CD8-positive, alpha-beta T cell (primary cell): ENCODE measurements at regions of chr17 and their contacts with region 1.

Region 1: GRCh38 chr17:65027305-65027704 is 29.2 kb downstream of the GNA13 start:
- DNase-seq: peak in 5 of 9 experiments; percentile 49 to 80 (median 66)
- ATAC-seq: peak; percentile 81
- H3K4me3 ChIP-seq: no peak overlapping the region
- H3K4me3 Mint-ChIP-seq: peak overlapping the region; percentile 45
- H3K27ac ChIP-seq: peak overlapping the region in 1 of 2 experiments; percentile 55
- H3K27ac Mint-ChIP-seq: peak overlapping the region; percentile 75
- H3K4me1 ChIP-seq: peaks cover 63% of the 10 kb centered on the region
- H3K4me1 Mint-ChIP-seq: peaks cover 87% of the 10 kb centered on the region
- H3K27me3 ChIP-seq: no peaks in the 10 kb centered on the region
- H3K27me3 Mint-ChIP-seq: no peaks in the 10 kb centered on the region
- CTCF ChIP-seq: peak; percentile 59

Region 2: DNA sequence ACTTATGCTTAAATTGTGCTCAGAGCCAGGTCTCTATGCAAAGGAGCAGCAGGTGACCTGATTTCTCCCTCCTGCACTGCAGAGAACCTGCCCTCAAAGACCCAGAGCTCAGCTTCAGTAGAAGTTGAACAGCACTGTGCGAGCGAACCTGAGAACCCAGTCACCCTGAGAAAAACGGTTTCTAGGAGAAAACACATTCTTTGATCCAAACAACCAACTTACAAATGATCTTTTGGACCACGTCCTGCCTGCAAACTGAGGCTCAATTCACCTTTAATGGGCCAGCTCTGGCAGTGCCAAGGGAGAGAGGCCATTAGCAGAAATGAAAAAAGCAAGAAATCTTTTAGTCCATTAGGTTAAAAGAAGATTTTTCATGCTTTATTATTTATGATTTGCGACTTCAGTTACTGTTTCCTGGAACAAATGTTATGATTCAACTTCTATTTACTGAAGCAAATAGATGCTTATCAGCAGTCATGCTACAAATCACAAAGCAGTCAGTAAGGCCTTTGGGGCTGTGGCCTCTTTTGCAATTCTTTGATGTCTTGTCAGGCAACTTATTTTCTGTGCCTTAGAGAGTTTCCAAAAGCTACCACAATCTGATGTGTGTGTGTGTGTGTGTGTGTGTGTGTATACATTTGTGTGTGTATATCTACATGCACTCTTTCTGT is 42.3 kb before region 1 on chr17:
- CTCF ChIA-PET with region 1: no interaction called
- POLR2A ChIA-PET with region 1: interaction called, 7 read pairs
- intact Hi-C with region 1: loop called in 1 of 2 experiments (anchors 2 kb)
- DNase-seq: peak in 8 of 9 experiments; percentile 30 to 87 (median 60)
- ATAC-seq: peak; percentile 48
- H3K4me3 ChIP-seq: peak overlapping the region; percentile 42 to 43
- H3K4me3 Mint-ChIP-seq: peak overlapping the region; percentile 76
- H3K27ac ChIP-seq: peak overlapping the region; percentile 82 to 99
- H3K27ac Mint-ChIP-seq: peak overlapping the region; percentile 99
- H3K4me1 ChIP-seq: peaks cover 34% of the 10 kb centered on the region
- H3K4me1 Mint-ChIP-seq: peaks cover 35% of the 10 kb centered on the region
- H3K27me3 ChIP-seq: no peaks in the 10 kb centered on the region
- H3K27me3 Mint-ChIP-seq: no peaks in the 10 kb centered on the region
- CTCF ChIP-seq: no peak

Region 3: GRCh38 chr17:65039336-65039988 is 12.2 kb after region 1 on chr17:
- CTCF ChIA-PET with region 1: interaction called, 7 read pairs
- POLR2A ChIA-PET with region 1: interaction called, 4 read pairs
- intact Hi-C with region 1: loop called (anchors 1 kb)
- DNase-seq: peak in 7 of 9 experiments; percentile 41 to 92 (median 61)
- ATAC-seq: peak; percentile 89
- H3K4me3 ChIP-seq: peak overlapping the region; percentile 3 to 10
- H3K4me3 Mint-ChIP-seq: peak overlapping the region; percentile 74
- H3K27ac ChIP-seq: peak overlapping the region; percentile 57 to 85
- H3K27ac Mint-ChIP-seq: peak overlapping the region; percentile 96
- H3K4me1 ChIP-seq: peaks cover 86% of the 10 kb centered on the region
- H3K4me1 Mint-ChIP-seq: peaks cover 85% of the 10 kb centered on the region
- H3K27me3 ChIP-seq: no peaks in the 10 kb centered on the region
- H3K27me3 Mint-ChIP-seq: no peaks in the 10 kb centered on the region
- CTCF ChIP-seq: no peak

Region 4: GRCh38 chr17:65047942-65048341 is 20.6 kb after region 1 on chr17:
- CTCF ChIA-PET with region 1: no interaction called
- POLR2A ChIA-PET with region 1: no interaction called
- intact Hi-C with region 1: loop called in 1 of 2 experiments (anchors 2 kb)
- DNase-seq: peak in 1 of 9 experiments; percentile 50
- ATAC-seq: no peak
- H3K4me3 ChIP-seq: no peak overlapping the region
- H3K4me3 Mint-ChIP-seq: no peak overlapping the region
- H3K27ac ChIP-seq: peak overlapping the region in 1 of 2 experiments; percentile 53
- H3K27ac Mint-ChIP-seq: peak overlapping the region; percentile 68
- H3K4me1 ChIP-seq: peaks cover 41% of the 10 kb centered on the region
- H3K4me1 Mint-ChIP-seq: peaks cover 82% of the 10 kb centered on the region
- H3K27me3 ChIP-seq: no peaks in the 10 kb centered on the region
- H3K27me3 Mint-ChIP-seq: no peaks in the 10 kb centered on the region
- CTCF ChIP-seq: no peak

Region 5: DNA sequence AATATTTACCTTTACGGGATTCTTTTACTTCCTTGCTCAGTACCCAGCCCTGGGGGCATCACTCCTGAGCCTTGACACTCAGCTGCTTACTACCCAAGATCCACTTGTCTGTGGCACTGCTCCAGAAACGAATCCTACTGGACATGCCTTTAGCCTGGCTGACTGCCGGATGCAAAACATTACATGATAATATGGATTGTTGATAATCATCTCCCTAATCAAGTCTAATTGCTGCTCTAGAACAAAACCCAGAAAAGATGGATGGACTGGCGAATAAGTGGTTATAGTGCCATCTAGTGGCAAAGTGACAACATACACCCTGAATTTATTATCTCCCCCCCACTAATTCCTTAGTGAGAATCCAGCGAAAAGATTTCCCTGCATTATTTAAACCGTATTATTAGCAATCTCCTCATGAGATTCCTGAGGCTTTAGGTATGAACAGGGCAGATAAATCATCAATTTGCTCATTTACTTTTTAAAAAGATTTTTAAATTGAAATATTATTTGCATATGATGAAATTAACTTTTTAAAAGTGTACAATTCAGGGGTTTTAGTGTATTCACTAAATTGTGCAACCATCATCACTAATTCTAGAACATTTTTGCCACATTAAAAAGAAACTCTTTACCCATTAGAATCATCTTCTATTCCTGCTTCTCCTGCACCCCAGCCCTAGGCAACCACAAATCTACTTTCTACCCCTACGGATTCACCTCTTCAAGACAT is 171.5 kb after region 1 on chr17:
- CTCF ChIA-PET with region 1: no interaction called
- POLR2A ChIA-PET with region 1: no interaction called
- intact Hi-C with region 1: no loop called
- DNase-seq: peak in 5 of 9 experiments; percentile 6 to 76 (median 52)
- ATAC-seq: peak; percentile 56
- H3K4me3 ChIP-seq: no peak overlapping the region
- H3K4me3 Mint-ChIP-seq: no peak overlapping the region
- H3K27ac ChIP-seq: no peak overlapping the region
- H3K27ac Mint-ChIP-seq: no peak overlapping the region
- H3K4me1 ChIP-seq: peaks cover 3% of the 10 kb centered on the region
- H3K4me1 Mint-ChIP-seq: peaks cover 5% of the 10 kb centered on the region
- H3K27me3 ChIP-seq: no peaks in the 10 kb centered on the region
- H3K27me3 Mint-ChIP-seq: no peaks in the 10 kb centered on the region
- CTCF ChIP-seq: peak; percentile 92

Region 6: DNA sequence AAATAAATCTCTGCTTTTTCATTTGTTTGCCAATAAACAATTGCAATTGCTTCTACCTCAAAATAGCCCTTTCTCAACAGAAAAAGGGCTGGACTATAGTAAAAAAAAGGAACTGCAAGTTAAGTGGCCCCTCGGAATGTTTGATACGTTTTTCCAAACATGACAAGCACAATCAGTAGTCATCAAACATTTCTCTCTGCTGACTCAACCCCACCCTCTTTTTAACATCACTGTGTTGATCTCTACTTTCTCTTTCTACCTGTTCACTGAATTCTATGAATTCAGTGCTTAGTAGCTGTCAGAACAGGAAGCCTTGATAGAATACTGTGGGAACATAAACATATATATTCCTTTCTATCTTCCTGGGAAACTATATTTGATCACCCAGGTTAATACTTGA is 650.6 kb after region 1 on chr17:
- CTCF ChIA-PET with region 1: no interaction called
- POLR2A ChIA-PET with region 1: no interaction called
- intact Hi-C with region 1: no loop called
- DNase-seq: no peak
- ATAC-seq: no peak
- H3K4me3 ChIP-seq: no peak overlapping the region
- H3K4me3 Mint-ChIP-seq: no peak overlapping the region
- H3K27ac ChIP-seq: no peak overlapping the region
- H3K27ac Mint-ChIP-seq: no peak overlapping the region
- H3K4me1 ChIP-seq: no peaks in the 10 kb centered on the region
- H3K4me1 Mint-ChIP-seq: peaks cover 3% of the 10 kb centered on the region
- H3K27me3 ChIP-seq: no peaks in the 10 kb centered on the region
- H3K27me3 Mint-ChIP-seq: no peaks in the 10 kb centered on the region
- CTCF ChIP-seq: no peak